ENCODE measurements at regions of chr16 and their contacts with region 1.

Region 1: GRCh38 chr16:58402796-58403195 is 10.5 kb downstream of the GINS3 start:
- DNase-seq: no peak
- ATAC-seq: no peak
- H3K4me3 Mint-ChIP-seq: no peak overlapping the region
- H3K27ac Mint-ChIP-seq: no peak overlapping the region
- H3K4me1 Mint-ChIP-seq: peaks cover 3% of the 10 kb centered on the region
- H3K27me3 Mint-ChIP-seq: no peaks in the 10 kb centered on the region
- CTCF ChIP-seq: no peak

Region 2: GRCh38 chr16:58306327-58306726 is 96.5 kb before region 1 on chr16:
- CTCF ChIA-PET with region 1: no interaction called
- POLR2A ChIA-PET with region 1: no interaction called
- intact Hi-C with region 1: no loop called
- DNase-seq: peak; percentile 81
- ATAC-seq: no peak
- H3K4me3 Mint-ChIP-seq: no peak overlapping the region
- H3K27ac Mint-ChIP-seq: no peak overlapping the region
- H3K4me1 Mint-ChIP-seq: no peaks in the 10 kb centered on the region
- H3K27me3 Mint-ChIP-seq: peaks cover 10% of the 10 kb centered on the region
- CTCF ChIP-seq: peak; percentile 71

Region 3: DNA sequence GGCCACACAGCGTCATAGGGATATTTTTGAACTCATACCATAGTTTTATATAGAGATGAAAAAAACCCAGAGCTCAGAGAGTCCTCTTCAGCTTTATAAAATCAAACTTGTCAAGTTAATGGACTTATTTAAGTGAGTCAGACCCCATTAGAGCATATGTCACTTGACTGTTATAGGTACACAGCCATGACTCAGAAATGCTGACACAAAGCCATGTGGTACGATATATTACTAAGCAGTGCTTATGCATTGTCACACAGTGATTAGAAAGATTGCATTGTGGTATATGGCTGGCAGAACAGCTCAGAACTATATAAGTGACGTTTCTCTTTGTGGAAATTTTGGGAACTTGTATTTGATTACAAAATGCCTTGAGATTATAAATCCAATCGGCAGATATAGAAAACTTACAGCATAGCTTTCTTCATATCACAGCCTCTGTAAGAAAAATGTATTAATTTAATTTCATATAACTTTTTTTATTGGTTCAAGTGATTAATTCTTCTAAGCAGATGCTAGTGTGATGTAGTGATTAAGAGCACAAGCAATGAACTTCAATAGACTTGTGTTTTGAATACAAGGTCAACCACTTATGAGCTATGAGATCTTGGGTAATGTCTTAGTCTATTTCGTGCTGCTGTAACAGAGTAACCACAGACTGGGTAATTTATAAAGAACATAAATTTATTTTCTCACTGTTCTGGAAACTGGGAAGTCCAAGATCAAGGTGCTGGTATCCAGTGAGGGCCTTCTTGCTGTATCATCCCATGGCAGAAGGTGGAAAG is 36.4 kb before region 1 on chr16:
- CTCF ChIA-PET with region 1: no interaction called
- POLR2A ChIA-PET with region 1: no interaction called
- intact Hi-C with region 1: no loop called
- DNase-seq: no peak
- ATAC-seq: peak; percentile 64
- H3K4me3 Mint-ChIP-seq: no peak overlapping the region
- H3K27ac Mint-ChIP-seq: no peak overlapping the region
- H3K4me1 Mint-ChIP-seq: no peaks in the 10 kb centered on the region
- H3K27me3 Mint-ChIP-seq: peaks cover 22% of the 10 kb centered on the region
- CTCF ChIP-seq: no peak

Region 4: DNA sequence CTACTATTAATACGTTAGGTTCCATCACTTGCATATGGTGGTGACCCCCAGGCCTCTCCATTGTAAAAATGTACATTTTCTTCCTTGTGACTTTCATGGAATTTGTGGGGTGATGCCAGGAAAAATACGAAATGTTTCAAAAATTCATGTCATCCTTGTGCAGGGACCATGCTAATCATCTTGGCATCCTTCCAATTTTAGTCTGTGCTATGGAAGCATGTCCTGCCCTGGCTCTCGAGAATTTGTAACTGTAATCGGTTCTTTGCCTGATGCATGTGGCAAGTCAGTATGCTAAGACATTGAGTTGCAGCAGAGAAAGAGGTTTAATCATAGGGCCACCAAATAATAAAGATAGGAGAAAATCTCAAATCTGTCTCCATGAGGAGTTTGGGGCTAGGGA is 24.9 kb before region 1 on chr16:
- CTCF ChIA-PET with region 1: no interaction called
- POLR2A ChIA-PET with region 1: no interaction called
- intact Hi-C with region 1: no loop called
- DNase-seq: no peak
- ATAC-seq: no peak
- H3K4me3 Mint-ChIP-seq: no peak overlapping the region
- H3K27ac Mint-ChIP-seq: no peak overlapping the region
- H3K4me1 Mint-ChIP-seq: no peaks in the 10 kb centered on the region
- H3K27me3 Mint-ChIP-seq: peaks cover 10% of the 10 kb centered on the region
- CTCF ChIP-seq: no peak

Region 5: GRCh38 chr16:58392215-58393137 is 10.3 kb before region 1 on chr16 and contains the start of gene GINS3:
- CTCF ChIA-PET with region 1: interaction called, 3 read pairs
- POLR2A ChIA-PET with region 1: interaction called, 12 read pairs
- intact Hi-C with region 1: no loop called
- DNase-seq: peak; percentile 93
- ATAC-seq: peak; percentile 97
- H3K4me3 Mint-ChIP-seq: peak within 1 kb of the TSS; percentile 93
- H3K27ac Mint-ChIP-seq: peak within 1 kb of the TSS; percentile 96
- H3K4me1 Mint-ChIP-seq: peaks cover 19% of the 10 kb centered on the region
- H3K27me3 Mint-ChIP-seq: no peaks in the 10 kb centered on the region
- CTCF ChIP-seq: no peak
- total RNA-seq, gene GINS3: 16.0 to 18.1 TPM

Region 6: DNA sequence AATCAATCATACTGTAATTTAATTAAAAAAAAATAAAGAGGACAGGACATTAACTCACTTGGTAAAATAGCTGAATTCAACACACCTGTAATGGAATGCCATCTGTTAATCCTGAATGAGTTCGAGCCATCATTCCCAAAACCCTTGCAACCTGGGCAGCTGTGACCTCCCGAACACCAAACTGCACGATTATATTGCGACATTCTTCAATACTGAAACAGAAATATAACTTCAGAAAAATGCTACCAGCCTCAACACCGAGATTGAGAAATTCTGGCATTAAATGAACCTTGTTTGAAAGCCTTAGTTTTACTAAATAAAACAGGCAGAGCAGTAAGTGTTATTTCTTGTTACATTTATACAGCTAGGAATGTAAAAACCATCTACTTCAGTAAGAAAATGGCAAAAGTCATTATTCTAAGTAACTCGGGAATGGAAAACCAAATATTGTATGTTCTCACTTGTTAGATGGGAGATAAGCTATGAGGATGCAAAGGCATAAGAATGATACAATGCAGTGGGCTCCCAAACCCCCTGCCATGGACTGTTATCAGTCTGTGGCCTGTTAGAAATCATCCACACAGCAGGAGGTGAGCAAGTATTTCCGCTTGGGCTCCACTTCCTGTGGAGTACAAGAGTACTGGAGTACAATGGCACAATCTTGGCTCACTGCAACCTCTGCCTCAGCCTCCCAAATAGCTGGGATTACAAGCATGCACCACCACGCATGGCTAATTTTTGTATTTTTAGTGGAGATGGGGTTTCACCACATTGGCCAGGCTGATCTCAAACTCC is 180.4 kb after region 1 on chr16:
- CTCF ChIA-PET with region 1: no interaction called
- POLR2A ChIA-PET with region 1: no interaction called
- intact Hi-C with region 1: no loop called
- DNase-seq: peak; percentile 32
- ATAC-seq: no peak
- H3K4me3 Mint-ChIP-seq: no peak overlapping the region
- H3K27ac Mint-ChIP-seq: peak overlapping the region; percentile 38
- H3K4me1 Mint-ChIP-seq: peaks cover 21% of the 10 kb centered on the region
- H3K27me3 Mint-ChIP-seq: no peaks in the 10 kb centered on the region
- CTCF ChIP-seq: no peak

Measured in activated CD8-positive, alpha-beta T cell treated with anti-CD3 and anti-CD28 coated beads for 36 hours (primary cell).